B cell (primary cell): ENCODE measurements at regions of chr12 and their contacts with region 1.

Region 1: GRCh38 chr12:10033783-10034545 is 3.5 kb downstream of the CLEC9A start:
- DNase-seq: peak; percentile 20
- ATAC-seq: no peak
- H3K4me3 ChIP-seq: no peak overlapping the region
- H3K4me3 Mint-ChIP-seq: no peak overlapping the region
- H3K27ac ChIP-seq: no peak overlapping the region
- H3K27ac Mint-ChIP-seq: no peak overlapping the region
- H3K4me1 ChIP-seq: no peaks in the 10 kb centered on the region
- H3K4me1 Mint-ChIP-seq: no peaks in the 10 kb centered on the region
- H3K27me3 ChIP-seq: peaks cover 0 to 3% (median 0%) of the 10 kb centered on the region in 4 experiments
- H3K27me3 Mint-ChIP-seq: peaks cover 46% of the 10 kb centered on the region
- CTCF ChIP-seq: peak; percentile 56

Region 2: GRCh38 chr12:9760699-9761418 is 273.1 kb before region 1 on chr12 and contains the start of gene CD69:
- CTCF ChIA-PET with region 1: no interaction called
- POLR2A ChIA-PET with region 1: no interaction called
- intact Hi-C with region 1: no loop called
- DNase-seq: peak; percentile 95
- ATAC-seq: peak; percentile 59
- H3K4me3 ChIP-seq: peak within 1 kb of the TSS; percentile 46 to 100 (median 75)
- H3K4me3 Mint-ChIP-seq: peak within 1 kb of the TSS; percentile 96
- H3K27ac ChIP-seq: peak within 1 kb of the TSS; percentile 89 to 93
- H3K27ac Mint-ChIP-seq: peak within 1 kb of the TSS; percentile 99
- H3K4me1 ChIP-seq: peaks cover 58 to 63% of the 10 kb centered on the region in 2 donors
- H3K4me1 Mint-ChIP-seq: peaks cover 69% of the 10 kb centered on the region
- H3K27me3 ChIP-seq: no peaks in the 10 kb centered on the region
- H3K27me3 Mint-ChIP-seq: no peaks in the 10 kb centered on the region
- CTCF ChIP-seq: no peak
- total RNA-seq, gene CD69: 44.8 and 45.1 TPM in 2 replicates

Region 3: DNA sequence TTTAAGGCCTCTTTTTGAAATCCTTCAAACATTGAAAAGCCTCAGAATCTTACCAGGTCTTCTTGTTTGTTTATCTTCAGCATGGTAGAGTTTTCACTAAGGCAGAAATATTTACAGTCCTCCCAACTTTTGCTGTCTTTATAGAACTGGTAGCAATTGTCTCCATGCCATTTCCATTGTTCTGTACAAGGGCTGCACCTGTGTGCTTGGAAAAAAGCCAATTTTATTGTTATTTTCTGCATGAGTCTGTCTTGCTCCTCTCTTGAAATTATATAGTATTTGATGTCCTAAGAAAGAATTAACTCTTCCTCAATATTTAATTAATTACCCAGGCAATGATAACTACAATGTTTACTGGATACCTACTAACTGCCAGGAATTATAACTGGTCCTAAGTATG is 41.5 kb after region 1 on chr12:
- CTCF ChIA-PET with region 1: no interaction called
- POLR2A ChIA-PET with region 1: no interaction called
- intact Hi-C with region 1: no loop called
- DNase-seq: no peak
- ATAC-seq: no peak
- H3K4me3 ChIP-seq: no peak overlapping the region
- H3K4me3 Mint-ChIP-seq: no peak overlapping the region
- H3K27ac ChIP-seq: no peak overlapping the region
- H3K27ac Mint-ChIP-seq: no peak overlapping the region
- H3K4me1 ChIP-seq: peaks cover 0 to 2% of the 10 kb centered on the region in 2 donors
- H3K4me1 Mint-ChIP-seq: peaks cover 5% of the 10 kb centered on the region
- H3K27me3 ChIP-seq: peaks cover 0 to 4% (median 0%) of the 10 kb centered on the region in 4 experiments
- H3K27me3 Mint-ChIP-seq: peaks cover 48% of the 10 kb centered on the region
- CTCF ChIP-seq: no peak

Region 4: DNA sequence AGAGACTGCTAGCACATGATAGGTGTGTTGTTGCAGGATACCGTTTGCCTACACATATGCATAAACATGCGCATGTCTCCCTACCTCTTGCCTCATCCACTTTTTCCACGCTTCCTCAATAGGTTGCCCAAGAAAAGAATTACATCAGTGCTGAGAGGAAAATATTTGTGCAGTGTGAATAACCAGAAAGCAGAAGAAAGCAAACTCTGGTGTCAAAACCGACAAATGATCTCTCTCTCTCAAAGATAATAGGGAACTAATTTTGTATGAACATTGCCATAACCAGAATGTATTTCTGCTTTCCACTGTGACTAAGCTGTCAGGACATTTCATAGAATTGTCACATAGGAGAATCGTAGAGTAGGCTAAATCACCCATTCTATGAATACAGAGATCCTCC is 94.7 kb after region 1 on chr12:
- CTCF ChIA-PET with region 1: no interaction called
- POLR2A ChIA-PET with region 1: no interaction called
- intact Hi-C with region 1: loop called (anchors 10 kb)
- DNase-seq: no peak
- ATAC-seq: no peak
- H3K4me3 ChIP-seq: peak overlapping the region in 1 of 5 experiments; percentile 71
- H3K4me3 Mint-ChIP-seq: no peak overlapping the region
- H3K27ac ChIP-seq: no peak overlapping the region
- H3K27ac Mint-ChIP-seq: no peak overlapping the region
- H3K4me1 ChIP-seq: peaks cover 7 to 17% of the 10 kb centered on the region in 2 donors
- H3K4me1 Mint-ChIP-seq: peaks cover 14% of the 10 kb centered on the region
- H3K27me3 ChIP-seq: peaks cover 0 to 40% (median 28%) of the 10 kb centered on the region in 4 experiments
- H3K27me3 Mint-ChIP-seq: peaks cover 62% of the 10 kb centered on the region
- CTCF ChIP-seq: no peak